Activated T-helper 1 cell treated with anti-CD3 and anti-CD28 coated beads, Interleukin-12 subunit alpha, Interleukin-12 subunit beta, Interleukin-2, Interleukin-4 antibody, amounts not matched to agents 30 ng/mL and 10 ng/mL and 1 ng/mL, durations not matched to agents 14 hours and 24 hours and 36 hours (primary cell): ENCODE measurements at regions of chr1 and their contacts with region 1.

Region 1: DNA sequence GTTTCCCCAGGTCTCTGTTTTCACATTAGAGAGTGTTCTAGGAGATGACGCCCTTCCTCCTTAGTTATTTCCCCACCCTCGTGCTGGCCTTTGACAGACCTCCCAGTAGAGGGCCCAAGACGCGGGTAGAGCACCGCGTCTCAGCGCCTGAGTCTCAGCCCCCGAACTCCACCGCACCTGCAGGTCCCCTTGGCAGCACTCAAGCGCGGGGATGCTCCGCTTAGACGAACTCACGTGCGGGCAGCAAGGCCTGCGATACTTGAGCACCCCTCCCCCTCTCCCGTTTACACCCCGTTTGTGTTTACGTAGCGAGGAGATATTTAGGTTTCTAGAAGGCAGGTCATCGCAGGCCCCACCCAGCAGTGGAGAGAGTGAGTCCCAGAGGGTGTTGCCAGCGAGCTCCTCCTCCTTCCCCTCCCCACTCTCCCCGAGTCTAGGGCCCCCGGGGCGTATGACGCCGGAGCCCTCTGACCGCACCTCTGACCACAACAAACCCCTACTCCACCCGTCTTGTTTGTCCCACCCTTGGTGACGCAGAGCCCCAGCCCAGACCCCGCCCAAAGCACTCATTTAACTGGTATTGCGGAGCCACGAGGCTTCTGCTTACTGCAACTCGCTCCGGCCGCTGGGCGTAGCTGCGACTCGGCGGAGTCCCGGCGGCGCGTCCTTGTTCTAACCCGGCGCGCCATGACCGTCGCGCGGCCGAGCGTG is at the start of gene CD55:
- DNase-seq: peak; percentile 99
- H3K4me3 Mint-ChIP-seq: peak within 1 kb of the TSS; percentile 88
- H3K27ac Mint-ChIP-seq: peak within 1 kb of the TSS; percentile 99
- H3K4me1 Mint-ChIP-seq: peaks cover 33% of the 10 kb centered on the region
- H3K27me3 Mint-ChIP-seq: peaks cover 2% of the 10 kb centered on the region
- total RNA-seq, gene CD55: 177 and 178 TPM in 2 replicates

Region 2: DNA sequence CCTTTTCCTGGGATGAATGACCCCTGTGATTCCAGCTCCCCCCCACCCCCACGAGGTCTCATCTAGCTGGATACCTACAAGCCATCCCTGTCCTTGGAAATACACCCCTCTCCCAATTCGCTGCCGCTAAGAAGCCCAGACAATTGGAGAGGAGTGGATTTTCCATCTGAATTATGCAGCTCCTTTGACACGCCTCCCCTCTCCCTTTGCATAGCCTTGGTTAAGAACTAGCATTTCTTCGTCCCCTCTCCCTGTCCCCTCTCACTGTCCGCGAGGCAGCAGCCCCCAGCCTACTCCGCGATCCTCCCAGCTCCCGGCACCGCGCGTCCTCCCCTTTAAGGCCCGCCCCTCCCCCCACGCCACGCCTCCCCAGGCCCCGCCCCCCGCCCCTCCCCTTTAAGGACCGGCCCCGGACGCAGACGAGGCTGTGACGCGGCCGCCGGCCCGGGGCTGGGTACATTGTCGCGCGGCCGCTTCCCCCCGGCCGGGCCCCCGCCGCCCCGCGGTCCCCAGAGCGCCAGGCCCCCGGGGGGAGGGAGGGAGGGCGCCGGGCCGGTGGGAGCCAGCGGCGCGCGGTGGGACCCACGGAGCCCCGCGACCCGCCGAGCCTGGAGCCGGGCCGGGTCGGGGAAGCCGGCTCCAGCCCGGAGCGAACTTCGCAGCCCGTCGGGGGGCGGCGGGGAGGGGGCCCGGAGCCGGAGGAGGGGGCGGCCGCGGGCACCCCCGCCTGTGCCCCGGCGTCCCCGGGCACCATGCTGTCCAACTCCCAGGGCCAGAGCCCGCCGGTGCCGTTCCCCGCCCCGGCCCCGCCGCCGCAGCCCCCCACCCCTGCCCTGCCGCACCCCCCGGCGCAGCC is 636.5 kb before region 1 on chr1 and contains the start of gene MAPKAPK2:
- intact Hi-C with region 1: loop called (anchors 5 kb)
- DNase-seq: peak; percentile 69
- H3K4me3 Mint-ChIP-seq: peak within 1 kb of the TSS; percentile 98
- H3K27ac Mint-ChIP-seq: peak within 1 kb of the TSS; percentile 96
- H3K4me1 Mint-ChIP-seq: peaks cover 72% of the 10 kb centered on the region
- H3K27me3 Mint-ChIP-seq: peaks cover 7% of the 10 kb centered on the region
- total RNA-seq, gene MAPKAPK2: 117 and 120 TPM in 2 replicates

Region 3: DNA sequence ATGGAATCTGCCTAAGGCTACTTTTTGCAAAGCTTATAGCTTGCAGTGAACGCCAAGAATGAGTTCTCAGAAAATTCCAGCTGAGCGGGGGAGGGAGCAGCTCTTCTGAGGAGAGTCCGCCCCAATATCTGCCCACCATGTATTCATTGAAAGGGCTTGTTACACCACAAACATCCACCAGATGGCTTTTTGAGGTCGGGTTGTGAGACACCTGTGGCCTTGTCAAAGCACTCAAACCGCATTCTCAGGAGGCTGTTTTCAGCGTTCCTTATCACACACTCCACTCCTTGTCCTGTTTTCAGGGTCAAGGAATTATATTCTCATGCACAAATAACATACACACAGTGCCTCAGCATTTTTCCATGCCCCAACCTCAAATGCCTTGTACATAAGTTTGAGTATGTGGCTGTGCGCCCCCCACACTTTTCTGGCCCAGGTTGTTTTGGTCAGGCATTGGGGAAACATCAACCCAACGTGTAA is 236.5 kb before region 1 on chr1:
- intact Hi-C with region 1: loop called (anchors 1 kb)
- DNase-seq: peak; percentile 50
- H3K4me3 Mint-ChIP-seq: no peak overlapping the region
- H3K27ac Mint-ChIP-seq: peak overlapping the region; percentile 5
- H3K4me1 Mint-ChIP-seq: peaks cover 39% of the 10 kb centered on the region
- H3K27me3 Mint-ChIP-seq: peaks cover 12% of the 10 kb centered on the region

Region 4: DNA sequence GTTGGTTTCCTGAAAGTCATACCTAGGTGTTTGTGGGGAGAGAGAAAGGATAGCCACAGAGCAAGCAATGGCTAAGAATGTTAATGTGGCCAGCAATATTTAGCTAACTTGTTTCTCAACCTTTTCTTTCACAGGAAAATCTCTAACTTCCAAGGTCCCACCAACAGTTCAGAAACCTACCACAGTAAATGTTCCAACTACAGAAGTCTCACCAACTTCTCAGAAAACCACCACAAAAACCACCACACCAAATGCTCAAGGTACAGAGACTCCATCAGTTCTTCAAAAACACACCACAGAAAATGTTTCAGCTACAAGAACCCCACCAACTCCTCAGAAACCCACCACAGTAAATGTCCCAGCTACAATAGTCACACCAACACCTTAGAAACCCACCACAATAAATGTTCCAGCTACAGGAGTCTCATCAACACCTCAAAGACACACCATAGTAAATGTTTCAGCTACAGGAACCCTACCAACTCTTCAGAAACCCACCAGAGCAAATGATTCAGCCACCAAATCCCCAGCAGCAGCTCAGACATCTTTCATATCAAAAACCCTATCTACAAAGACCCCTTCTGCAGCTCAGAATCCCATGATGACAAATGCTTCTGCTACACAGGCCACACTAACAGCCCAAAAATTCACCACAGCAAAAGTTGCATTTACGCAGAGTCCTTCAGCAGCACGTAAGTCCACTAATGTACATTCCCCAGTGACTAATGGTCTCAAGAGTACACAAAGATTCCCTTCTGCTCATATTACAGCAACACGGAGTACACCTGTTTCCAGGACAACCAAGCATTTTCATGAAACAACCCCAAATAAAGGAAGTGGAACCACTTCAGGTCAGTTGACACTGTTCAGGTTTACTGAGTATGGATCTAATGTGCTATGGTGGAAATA is 15.6 kb after region 1 on chr1:
- intact Hi-C with region 1: loop called (anchors 1 kb)
- DNase-seq: peak; percentile 65
- H3K4me3 Mint-ChIP-seq: peak overlapping the region; percentile 44
- H3K27ac Mint-ChIP-seq: peak overlapping the region; percentile 89
- H3K4me1 Mint-ChIP-seq: peaks cover 73% of the 10 kb centered on the region
- H3K27me3 Mint-ChIP-seq: peaks cover 2% of the 10 kb centered on the region

Region 5: GRCh38 chr1:207404849-207405525 is 83.8 kb after region 1 on chr1:
- intact Hi-C with region 1: loop called (anchors 1 kb)
- DNase-seq: no peak
- H3K4me3 Mint-ChIP-seq: no peak overlapping the region
- H3K27ac Mint-ChIP-seq: no peak overlapping the region
- H3K4me1 Mint-ChIP-seq: peaks cover 21% of the 10 kb centered on the region
- H3K27me3 Mint-ChIP-seq: peaks cover 2% of the 10 kb centered on the region

Region 6: DNA sequence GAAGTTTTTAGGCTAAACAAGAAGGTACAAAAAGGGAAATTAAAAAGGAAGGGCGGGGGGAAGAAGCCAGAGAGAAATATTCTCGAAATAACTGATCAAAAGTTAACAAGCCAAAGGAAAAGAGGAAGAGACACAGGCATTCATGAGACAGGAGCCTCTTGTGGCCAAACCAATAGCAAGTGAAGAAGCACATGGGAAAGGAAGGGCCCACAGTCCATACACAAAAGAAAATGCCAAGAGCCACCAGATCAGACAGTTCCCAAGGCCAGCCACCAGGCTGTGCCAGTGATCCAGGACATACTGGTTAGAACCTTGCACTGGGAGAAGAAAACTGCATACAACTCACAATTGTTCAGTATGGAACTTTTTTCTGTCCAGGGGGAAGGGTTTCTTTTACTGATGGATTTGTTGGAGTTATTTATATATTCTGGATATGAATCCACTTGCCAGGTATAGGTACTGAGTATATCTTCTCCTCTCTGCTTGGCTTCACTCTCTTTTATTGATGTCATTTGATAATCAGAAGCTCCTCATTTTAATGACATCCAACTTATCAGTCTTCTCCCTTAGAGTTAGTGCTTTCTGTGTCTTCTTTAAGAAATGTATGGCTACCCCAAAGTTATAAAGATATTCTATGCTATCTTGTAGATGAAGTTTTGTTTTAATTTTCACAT is 507.4 kb after region 1 on chr1:
- intact Hi-C with region 1: loop called (anchors 5 kb)
- DNase-seq: peak; percentile 36
- H3K4me3 Mint-ChIP-seq: no peak overlapping the region
- H3K27ac Mint-ChIP-seq: peak overlapping the region; percentile 67
- H3K4me1 Mint-ChIP-seq: peaks cover 98% of the 10 kb centered on the region
- H3K27me3 Mint-ChIP-seq: peaks cover 2% of the 10 kb centered on the region